ENCODE measurements at regions of chr2 and their contacts with region 1.

Region 1: DNA sequence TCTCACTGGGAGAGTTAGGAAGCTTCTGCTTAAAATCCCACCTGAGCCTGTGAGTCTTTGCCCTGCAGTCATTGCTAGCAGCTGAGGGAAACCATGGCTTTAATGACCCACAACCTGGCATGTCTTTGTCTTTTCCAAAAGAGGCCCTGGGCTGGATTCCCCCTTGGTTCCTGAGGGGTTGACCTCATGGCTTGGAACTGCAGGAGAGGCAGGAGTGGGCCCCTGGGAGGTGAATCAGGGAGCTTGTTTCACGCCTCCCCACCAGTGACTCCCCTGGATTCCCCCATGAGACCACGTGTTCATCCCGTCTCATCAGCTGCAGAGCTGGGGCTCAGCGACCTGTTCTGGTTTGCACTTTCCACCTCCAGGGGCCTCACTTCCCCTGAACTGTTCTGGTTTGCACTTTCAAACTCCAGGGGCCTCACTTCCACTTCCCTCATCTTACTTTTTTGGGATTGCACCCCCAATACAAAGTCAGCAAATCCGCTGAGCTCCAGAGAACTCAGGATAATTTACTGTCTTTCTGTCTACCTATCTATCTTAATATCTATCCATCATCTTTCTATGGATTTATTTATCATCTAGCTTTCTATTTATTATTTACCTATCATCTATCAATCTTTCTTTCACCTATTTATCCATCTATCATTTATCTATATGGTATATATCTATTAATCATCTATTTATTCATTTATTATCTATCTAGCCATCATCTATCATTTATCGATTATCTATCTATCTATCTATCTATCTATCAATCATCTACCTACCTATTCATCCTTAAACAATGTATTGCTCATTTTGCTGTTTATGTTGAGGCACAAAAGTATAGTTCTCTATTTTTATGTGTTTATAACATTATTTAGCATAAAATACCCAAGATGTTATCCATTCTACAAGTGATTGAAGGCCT is 58.7 kb upstream of the TMEM18 start:
- DNase-seq: no peak
- ATAC-seq: no peak
- H3K4me3 ChIP-seq: no peak overlapping the region
- H3K27ac ChIP-seq: no peak overlapping the region
- H3K4me1 ChIP-seq: 0 out of 2 replicates have a peak, but pooled peaks cover under 1% of the 10 kb centered on the region
- H3K27me3 ChIP-seq: no peaks in the 10 kb centered on the region
- CTCF ChIP-seq: no peak

Region 2: DNA sequence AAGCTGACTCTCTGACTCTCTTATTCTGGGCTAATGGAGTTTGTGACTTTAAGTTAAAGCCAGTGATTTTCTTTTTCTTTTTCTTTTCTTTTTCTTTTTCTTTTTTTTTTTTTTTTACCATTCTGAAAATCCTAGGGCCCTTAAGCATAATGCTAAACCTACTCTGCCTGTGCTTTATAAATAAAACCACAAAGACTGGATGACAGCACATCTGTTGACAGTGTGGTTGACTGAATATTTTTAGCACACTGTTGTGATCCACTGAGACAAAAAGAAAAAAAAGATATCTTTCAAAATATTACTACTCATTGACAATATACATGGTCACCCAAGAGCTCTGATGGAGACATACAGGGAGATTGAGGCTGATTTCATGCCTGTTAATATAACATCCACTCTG is 336.3 kb after region 1 on chr2:
- CTCF ChIA-PET with region 1: no interaction called
- POLR2A ChIA-PET with region 1: interaction called, 13 read pairs
- in situ Hi-C with region 1: no loop called
- intact Hi-C with region 1: no loop called
- DNase-seq: no peak
- ATAC-seq: no peak
- H3K4me3 ChIP-seq: no peak overlapping the region
- H3K27ac ChIP-seq: no peak overlapping the region
- H3K4me1 ChIP-seq: no peaks in the 10 kb centered on the region
- H3K27me3 ChIP-seq: no peaks in the 10 kb centered on the region
- CTCF ChIP-seq: no peak

Region 3: GRCh38 chr2:1455466-1455865 is 719.5 kb after region 1 on chr2:
- CTCF ChIA-PET with region 1: no interaction called
- POLR2A ChIA-PET with region 1: no interaction called
- in situ Hi-C with region 1: no loop called
- intact Hi-C with region 1: no loop called
- DNase-seq: no peak
- ATAC-seq: no peak
- H3K4me3 ChIP-seq: no peak overlapping the region
- H3K27ac ChIP-seq: no peak overlapping the region
- H3K4me1 ChIP-seq: no peaks in the 10 kb centered on the region
- H3K27me3 ChIP-seq: peaks cover 5% of the 10 kb centered on the region; the same call in 1 of the 2 replicates
- CTCF ChIP-seq: no peak